Spleen (tissue), 13 donors: ENCODE measurements at regions of chr14 and their contacts with region 1.

Region 1: GRCh38 chr14:101964297-101965144 is at the start of gene DYNC1H1:
- DNase-seq: peak; percentile 98
- H3K4me3 ChIP-seq: peak within 1 kb of the TSS; percentile 82 to 100 (median 94)
- H3K27ac ChIP-seq: peak within 1 kb of the TSS; percentile 89 to 96 (median 94)
- H3K4me1 ChIP-seq: peaks cover 17 to 75% (median 50%) of the 10 kb centered on the region in 6 donors
- H3K27me3 ChIP-seq: no peaks in the 10 kb centered on the region
- CTCF ChIP-seq: no peak
- POLR2A ChIP-seq: peak; percentile 75 to 96 (median 90)
- total RNA-seq, gene DYNC1H1: 270 to 446 (median 403) TPM

Region 2: DNA sequence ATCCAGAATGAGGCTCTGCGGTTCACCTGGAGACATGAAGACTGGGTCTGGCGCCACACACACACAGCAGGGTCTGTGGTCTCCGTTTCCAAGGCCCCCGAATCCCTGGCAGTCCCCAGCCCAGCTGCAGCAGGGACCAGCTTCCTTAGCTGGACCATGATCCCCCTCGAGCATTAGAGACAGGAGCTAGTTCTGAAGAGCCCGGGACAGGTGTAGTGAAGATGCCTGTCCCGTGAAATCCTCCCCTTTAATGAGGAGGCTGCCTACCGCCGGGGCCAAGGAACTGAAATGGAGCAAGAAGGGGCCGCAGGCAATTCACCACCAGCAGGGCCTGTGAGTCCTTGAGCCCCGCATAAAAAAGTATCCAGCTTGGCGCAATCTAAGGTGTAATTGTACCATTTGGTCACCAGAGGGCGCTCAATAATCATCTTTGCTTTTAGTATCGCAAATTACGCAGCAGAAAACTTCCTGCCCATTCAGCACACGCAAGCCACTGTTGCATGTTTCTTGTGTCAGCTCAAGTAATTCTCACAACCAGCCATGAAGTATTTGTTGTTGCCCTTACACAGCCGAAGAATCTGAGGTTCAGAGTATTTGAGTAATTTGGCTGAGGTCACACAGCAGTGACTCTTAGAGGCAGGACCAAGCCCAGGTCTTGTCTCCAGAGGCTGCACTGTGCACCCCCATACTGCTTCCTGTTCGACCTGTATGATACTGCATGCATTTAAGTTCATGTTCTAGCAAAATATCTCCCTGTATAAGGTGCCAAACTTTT is 257.3 kb before region 1 on chr14:
- intact Hi-C with region 1: loop called (anchors 10 kb)
- DNase-seq: no peak
- H3K4me3 ChIP-seq: peak overlapping the region in 1 of 8 donors; percentile 47
- H3K27ac ChIP-seq: peak overlapping the region; percentile 78 to 91 (median 88)
- H3K4me1 ChIP-seq: peaks cover 19 to 53% (median 31%) of the 10 kb centered on the region in 6 donors
- H3K27me3 ChIP-seq: peaks cover 0 to 16% (median 0%) of the 10 kb centered on the region in 7 donors
- CTCF ChIP-seq: peak; percentile 89 to 97 (median 95)
- POLR2A ChIP-seq: no peak

Region 3: GRCh38 chr14:102086972-102087761 is 122.6 kb after region 1 on chr14 and contains the start of gene HSP90AA1:
- intact Hi-C with region 1: loop called (anchors 5 kb)
- DNase-seq: peak; percentile 99
- H3K4me3 ChIP-seq: peak within 1 kb of the TSS; percentile 51 to 92 (median 85)
- H3K27ac ChIP-seq: peak within 1 kb of the TSS; percentile 98 to 100 (median 100)
- H3K4me1 ChIP-seq: peaks cover 38 to 67% (median 55%) of the 10 kb centered on the region in 6 donors
- H3K27me3 ChIP-seq: no peaks in the 10 kb centered on the region
- CTCF ChIP-seq: peak in 4 of 11 experiments; percentile 6 to 22 (median 14)
- POLR2A ChIP-seq: peak; percentile 90 to 99 (median 93)
- total RNA-seq, gene HSP90AA1: 162 to 395 (median 240) TPM